ENCODE measurements at regions of chr6 and their contacts with region 1.

Region 1: GRCh38 chr6:22062807-22063408 is 233.9 kb downstream of the PRL start:
- DNase-seq: peak in 10 of 14 experiments; percentile 1 to 77 (median 42)
- ATAC-seq: peak; percentile 89
- H3K4me3 ChIP-seq: peak overlapping the region; percentile 15
- H3K4me3 Mint-ChIP-seq: peak overlapping the region; percentile 56
- H3K27ac ChIP-seq: no peak overlapping the region
- H3K27ac Mint-ChIP-seq: peak overlapping the region; percentile 65
- H3K4me1 ChIP-seq: peaks cover 9% of the 10 kb centered on the region
- H3K4me1 Mint-ChIP-seq: peaks cover 19% of the 10 kb centered on the region
- H3K27me3 ChIP-seq: no peaks in the 10 kb centered on the region
- H3K27me3 Mint-ChIP-seq: no peaks in the 10 kb centered on the region
- CTCF ChIP-seq: no peak

Region 2: DNA sequence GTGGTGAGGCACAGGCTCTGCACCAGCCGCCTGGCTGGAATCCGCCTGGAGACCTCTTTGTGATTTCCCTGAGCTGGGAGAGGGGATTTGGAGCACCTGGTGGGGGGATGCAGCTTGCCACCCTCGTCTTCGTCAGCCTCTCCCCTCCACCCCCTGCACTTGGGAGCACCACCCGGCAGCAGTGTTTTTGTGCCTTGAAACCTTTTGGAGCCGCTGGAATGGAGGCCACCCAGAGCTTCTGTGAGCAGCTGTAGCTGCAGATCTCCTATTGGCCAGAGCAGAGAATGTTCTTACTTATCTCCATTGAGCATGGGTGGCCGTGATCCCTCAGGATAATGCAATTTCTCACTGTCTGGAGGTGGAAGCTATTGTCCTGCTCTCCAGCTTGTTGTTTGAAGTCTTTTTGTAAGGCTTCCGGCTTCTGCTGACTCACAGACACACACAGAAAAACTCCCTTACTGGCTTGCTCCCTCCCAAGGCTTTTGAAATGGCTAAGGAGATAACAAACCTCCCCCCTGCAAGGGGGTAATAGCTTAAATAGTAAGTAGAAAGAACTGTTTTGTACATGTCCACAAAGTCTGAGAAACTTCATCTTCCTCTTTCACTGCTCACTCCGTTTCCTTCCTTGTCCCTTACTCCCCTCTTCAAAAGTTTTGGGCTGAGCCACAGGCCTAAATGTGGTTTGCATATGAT is 37.3 kb before region 1 on chr6:
- CTCF ChIA-PET with region 1: no interaction called
- POLR2A ChIA-PET with region 1: no interaction called
- intact Hi-C with region 1: loop called in 1 of 2 experiments (anchors 5 kb)
- DNase-seq: peak in 3 of 14 experiments; percentile 7 to 46 (median 44)
- ATAC-seq: peak; percentile 66
- H3K4me3 ChIP-seq: no peak overlapping the region
- H3K4me3 Mint-ChIP-seq: peak overlapping the region; percentile 35
- H3K27ac ChIP-seq: no peak overlapping the region
- H3K27ac Mint-ChIP-seq: peak overlapping the region; percentile 69
- H3K4me1 ChIP-seq: peaks cover 4% of the 10 kb centered on the region
- H3K4me1 Mint-ChIP-seq: peaks cover 54% of the 10 kb centered on the region
- H3K27me3 ChIP-seq: no peaks in the 10 kb centered on the region
- H3K27me3 Mint-ChIP-seq: no peaks in the 10 kb centered on the region
- CTCF ChIP-seq: no peak

Region 3: DNA sequence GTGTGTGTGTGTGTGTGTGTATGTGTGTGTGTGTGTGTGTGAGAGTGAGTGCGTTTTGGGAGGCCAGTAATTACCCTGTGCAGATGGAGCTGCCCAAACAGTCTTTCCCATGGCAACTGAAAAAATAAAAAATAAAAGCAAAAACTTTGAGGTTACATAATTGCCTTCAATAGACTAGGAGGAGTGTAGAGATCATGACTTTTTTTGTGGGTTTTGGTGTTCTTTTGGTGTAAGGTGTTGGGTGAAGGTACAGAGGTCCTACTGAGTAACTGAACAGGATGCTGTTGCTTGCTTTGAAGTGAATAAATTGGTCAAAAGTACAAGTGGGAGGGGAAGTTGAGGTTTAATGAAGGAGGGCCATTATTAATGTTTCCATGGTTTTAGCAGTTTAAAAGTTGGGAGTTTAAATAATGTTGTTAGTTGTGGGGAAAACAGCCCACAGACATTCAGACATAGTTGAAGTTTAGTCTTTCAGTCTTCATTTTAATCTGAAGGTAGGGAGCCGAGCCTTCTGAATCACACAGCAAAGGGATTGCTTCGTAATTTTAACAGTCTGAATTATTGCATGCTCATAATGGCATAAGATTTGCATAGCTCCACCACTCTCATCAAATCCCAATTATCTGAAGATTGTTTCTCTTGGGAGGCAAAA is 17.5 kb before region 1 on chr6:
- CTCF ChIA-PET with region 1: no interaction called
- POLR2A ChIA-PET with region 1: no interaction called
- intact Hi-C with region 1: loop called in 1 of 2 experiments (anchors 2 kb)
- DNase-seq: peak in 2 of 14 experiments; percentile 24 to 39
- ATAC-seq: peak; percentile 76
- H3K4me3 ChIP-seq: no peak overlapping the region
- H3K4me3 Mint-ChIP-seq: peak overlapping the region; percentile 3
- H3K27ac ChIP-seq: no peak overlapping the region
- H3K27ac Mint-ChIP-seq: peak overlapping the region; percentile 32
- H3K4me1 ChIP-seq: no peaks in the 10 kb centered on the region
- H3K4me1 Mint-ChIP-seq: peaks cover 7% of the 10 kb centered on the region
- H3K27me3 ChIP-seq: no peaks in the 10 kb centered on the region
- H3K27me3 Mint-ChIP-seq: no peaks in the 10 kb centered on the region
- CTCF ChIP-seq: no peak